ENCODE measurements at regions of chr2 and their contacts with region 1.

Region 1: GRCh38 chr2:225889446-225889850 is 489.9 kb downstream of the NYAP2 start:
- DNase-seq: peak; percentile 75
- H3K4me3 ChIP-seq: no peak overlapping the region
- H3K27ac ChIP-seq: no peak overlapping the region
- H3K4me1 ChIP-seq: peaks cover 7% of the 10 kb centered on the region
- H3K27me3 ChIP-seq: no peaks in the 10 kb centered on the region
- CTCF ChIP-seq: peak; percentile 82

Region 2: GRCh38 chr2:226118471-226119430 is 229.3 kb after region 1 on chr2:
- CTCF ChIA-PET with region 1: no interaction called
- POLR2A ChIA-PET with region 1: no interaction called
- intact Hi-C with region 1: loop called (anchors 10 kb)
- DNase-seq: peak; percentile 92
- H3K4me3 ChIP-seq: peak overlapping the region; percentile 9
- H3K27ac ChIP-seq: peak overlapping the region; percentile 55
- H3K4me1 ChIP-seq: peaks cover 84% of the 10 kb centered on the region
- H3K27me3 ChIP-seq: no peaks in the 10 kb centered on the region
- CTCF ChIP-seq: no peak